ENCODE measurements at regions of chr6 and their contacts with region 1.

Region 1: GRCh38 chr6:37018198-37019064 is 13.0 kb downstream of the FGD2 start:
- DNase-seq: peak; percentile 97
- ATAC-seq: peak; percentile 97
- H3K4me3 Mint-ChIP-seq: peak overlapping the region; percentile 5
- H3K27ac Mint-ChIP-seq: peak overlapping the region; percentile 80
- H3K4me1 Mint-ChIP-seq: peaks cover 52% of the 10 kb centered on the region
- H3K27me3 Mint-ChIP-seq: no peaks in the 10 kb centered on the region

Region 2: DNA sequence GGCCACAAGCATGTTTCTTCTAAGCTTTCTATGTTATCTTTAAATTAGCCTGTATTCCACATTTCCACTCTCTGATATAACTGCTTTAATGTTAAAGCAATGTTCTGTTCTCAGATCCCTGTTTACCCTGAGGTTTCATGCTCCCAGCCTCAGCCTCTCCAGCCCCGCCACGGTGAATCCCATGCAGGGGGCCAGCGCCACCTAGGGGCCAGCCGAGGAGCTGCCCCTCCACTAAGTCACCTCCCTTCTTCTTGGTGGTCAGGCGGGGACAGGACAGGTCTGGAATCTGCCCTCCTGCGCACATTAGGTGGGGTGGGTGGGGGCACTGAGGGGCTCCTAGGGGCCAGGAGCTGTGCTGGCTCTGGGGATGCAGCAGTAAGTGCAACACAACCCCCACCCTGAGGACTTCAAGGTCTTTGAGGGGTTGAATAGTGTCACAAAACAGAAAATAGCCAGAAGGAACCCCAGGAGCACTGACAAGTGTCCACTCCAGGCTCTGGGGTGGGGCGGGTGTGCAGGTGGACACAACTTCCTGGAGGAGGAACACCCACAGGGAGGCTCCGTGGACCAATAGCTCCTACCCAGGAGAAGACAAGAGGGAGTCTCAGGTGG is 259.2 kb before region 1 on chr6:
- CTCF ChIA-PET with region 1: interaction called, 121 read pairs
- DNase-seq: peak; percentile 85
- ATAC-seq: peak; percentile 61
- H3K4me3 Mint-ChIP-seq: no peak overlapping the region
- H3K27ac Mint-ChIP-seq: no peak overlapping the region
- H3K4me1 Mint-ChIP-seq: peaks cover 46% of the 10 kb centered on the region
- H3K27me3 Mint-ChIP-seq: no peaks in the 10 kb centered on the region

Region 3: GRCh38 chr6:36885461-36886401 is 132.7 kb before region 1 on chr6 and contains the start of gene C6orf89:
- CTCF ChIA-PET with region 1: interaction called, 269 read pairs
- DNase-seq: peak; percentile 99
- ATAC-seq: peak; percentile 99
- H3K4me3 Mint-ChIP-seq: peak within 1 kb of the TSS; percentile 92
- H3K27ac Mint-ChIP-seq: peak within 1 kb of the TSS; percentile 91
- H3K4me1 Mint-ChIP-seq: peaks cover 40% of the 10 kb centered on the region
- H3K27me3 Mint-ChIP-seq: no peaks in the 10 kb centered on the region
- total RNA-seq, gene C6orf89: 46.4 to 47.7 TPM

Region 4: DNA sequence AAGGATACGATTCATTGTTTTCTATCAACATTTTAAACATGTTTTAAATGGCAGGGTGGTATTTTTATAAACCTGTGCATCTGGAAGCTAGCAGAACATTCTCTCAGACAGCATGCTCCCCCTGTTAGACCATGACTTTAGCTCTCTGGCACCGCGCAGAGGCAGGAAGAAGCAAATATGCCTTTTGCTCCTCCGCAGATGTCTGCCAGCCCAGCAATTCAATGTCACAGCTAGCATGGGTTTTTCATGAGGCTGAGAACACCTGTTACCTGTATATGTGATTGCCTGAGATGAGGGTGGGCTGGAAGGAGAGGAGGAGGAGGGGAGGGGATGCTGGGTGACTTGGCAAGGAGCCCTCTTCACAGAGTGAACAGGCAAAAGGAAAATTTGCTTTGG is 39.1 kb before region 1 on chr6:
- CTCF ChIA-PET with region 1: interaction called, 36 read pairs
- DNase-seq: peak; percentile 52
- ATAC-seq: peak; percentile 59
- H3K4me3 Mint-ChIP-seq: no peak overlapping the region
- H3K27ac Mint-ChIP-seq: peak overlapping the region; percentile 23
- H3K4me1 Mint-ChIP-seq: peaks cover 24% of the 10 kb centered on the region
- H3K27me3 Mint-ChIP-seq: no peaks in the 10 kb centered on the region

Region 5: DNA sequence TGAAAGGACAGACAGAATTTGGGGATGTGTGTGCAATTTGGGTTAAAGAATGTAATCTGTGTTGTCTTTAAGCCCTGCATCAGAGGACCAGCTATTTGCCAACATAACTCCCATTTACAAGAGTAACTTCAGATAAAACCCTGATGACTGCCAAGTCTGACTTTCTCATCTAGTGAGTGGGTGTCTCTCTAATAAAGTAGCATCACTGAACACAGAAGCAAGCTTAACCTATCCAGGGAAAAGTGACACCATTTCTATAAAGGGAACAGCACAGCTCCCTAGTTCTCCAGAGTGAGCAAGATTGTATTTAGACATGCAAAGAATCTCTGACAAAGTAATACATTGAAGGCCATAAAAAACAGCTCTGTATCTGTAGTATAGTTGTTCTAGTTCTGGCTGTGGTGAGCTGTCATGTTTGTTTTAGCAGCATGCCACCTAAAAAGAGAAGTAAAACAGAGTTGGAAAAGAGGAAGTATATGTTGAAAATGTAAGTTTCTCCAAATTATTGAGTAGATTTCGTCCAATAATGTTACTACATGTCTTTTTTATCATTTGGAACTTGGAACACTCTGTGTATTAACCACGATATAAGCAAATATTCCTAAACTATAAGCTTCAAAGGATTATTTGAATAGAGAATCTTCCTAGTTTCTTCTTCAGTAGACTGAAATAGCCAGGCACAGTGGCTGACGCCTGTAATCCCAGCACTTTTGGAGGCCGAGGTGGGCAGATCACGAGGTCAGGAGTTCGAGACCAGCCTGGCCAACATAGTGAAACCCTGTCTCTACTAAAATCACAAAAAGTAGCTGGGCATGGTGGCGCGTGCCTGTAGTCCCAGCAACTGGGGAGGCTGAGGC is 142.7 kb after region 1 on chr6:
- CTCF ChIA-PET with region 1: interaction called, 16 read pairs
- DNase-seq: no peak
- ATAC-seq: no peak
- H3K4me3 Mint-ChIP-seq: no peak overlapping the region
- H3K27ac Mint-ChIP-seq: no peak overlapping the region
- H3K4me1 Mint-ChIP-seq: peaks cover 26% of the 10 kb centered on the region
- H3K27me3 Mint-ChIP-seq: no peaks in the 10 kb centered on the region

Region 6: DNA sequence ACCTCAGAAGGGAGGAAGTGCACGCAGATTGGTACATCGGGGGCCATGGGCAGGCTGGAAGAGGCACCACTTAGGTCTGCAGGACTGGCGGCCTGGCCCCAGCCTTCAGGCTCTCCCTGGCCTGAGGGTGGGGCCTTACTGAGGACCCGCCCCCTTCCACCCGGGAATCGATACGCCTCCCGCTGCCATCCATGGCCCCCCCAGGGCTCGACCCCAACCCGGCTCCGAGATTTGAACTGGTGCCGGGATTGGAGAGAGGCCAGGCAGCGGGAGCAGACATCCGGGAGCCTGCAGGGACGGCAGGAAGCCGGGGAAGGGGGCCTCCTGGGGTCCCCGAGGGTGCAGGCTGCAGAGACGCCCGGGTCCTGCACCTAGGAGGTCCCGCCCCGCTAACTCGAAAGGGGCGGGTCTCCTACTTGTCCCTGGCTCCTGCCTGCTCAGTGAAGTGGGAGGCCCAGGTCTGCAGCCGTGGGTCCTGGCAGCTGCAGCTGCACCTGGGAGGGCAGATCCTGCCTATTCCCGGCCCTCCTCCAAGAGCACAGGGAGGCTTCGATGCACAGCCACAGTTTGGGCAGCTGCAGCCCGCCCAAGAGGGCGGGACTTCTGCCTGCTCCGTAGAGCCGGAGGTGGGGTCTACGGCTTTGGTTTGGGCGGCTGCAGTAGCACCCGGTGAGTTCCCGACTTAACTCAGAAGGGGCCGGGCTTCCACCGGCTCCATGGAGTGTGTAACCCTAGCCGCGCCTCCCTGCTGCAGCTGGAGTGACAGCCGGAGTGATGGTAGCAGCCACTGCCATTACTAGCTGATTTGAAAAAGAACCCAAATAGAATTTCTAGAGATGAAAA is 203.9 kb after region 1 on chr6:
- CTCF ChIA-PET with region 1: interaction called, 899 read pairs
- DNase-seq: peak; percentile 89
- ATAC-seq: peak; percentile 95
- H3K4me3 Mint-ChIP-seq: peak overlapping the region; percentile 79
- H3K27ac Mint-ChIP-seq: peak overlapping the region; percentile 71
- H3K4me1 Mint-ChIP-seq: peaks cover 24% of the 10 kb centered on the region
- H3K27me3 Mint-ChIP-seq: no peaks in the 10 kb centered on the region